Caco-2 (cell line): ENCODE measurements at regions of chr19 and their contacts with region 1.

Region 1: GRCh38 chr19:37370880-37371661 is at the start of gene ZNF527:
- DNase-seq: peak; percentile 93 to 97
- H3K4me3 ChIP-seq: peak within 1 kb of the TSS; percentile 57
- H3K4me3 Mint-ChIP-seq: peak within 1 kb of the TSS; percentile 88
- H3K27ac Mint-ChIP-seq: peak within 1 kb of the TSS; percentile 94
- H3K4me1 ChIP-seq: no peaks in the 10 kb centered on the region
- H3K4me1 Mint-ChIP-seq: no peaks in the 10 kb centered on the region
- H3K27me3 ChIP-seq: no peaks in the 10 kb centered on the region
- H3K27me3 Mint-ChIP-seq: no peaks in the 10 kb centered on the region
- CTCF ChIP-seq: no peak
- total RNA-seq, gene ZNF527: 0.88 and 0.97 TPM in 2 replicates

Region 2: GRCh38 chr19:37077934-37078725 is 292.9 kb before region 1 on chr19 and contains the start of gene ZNF420:
- CTCF ChIA-PET with region 1: no interaction called
- POLR2A ChIA-PET with region 1: interaction called, 4 read pairs
- intact Hi-C with region 1: loop called (anchors 2 kb)
- DNase-seq: peak; percentile 88 to 93
- H3K4me3 ChIP-seq: peak within 1 kb of the TSS; percentile 63
- H3K4me3 Mint-ChIP-seq: peak within 1 kb of the TSS; percentile 84
- H3K27ac Mint-ChIP-seq: peak within 1 kb of the TSS; percentile 83
- H3K4me1 ChIP-seq: no peaks in the 10 kb centered on the region
- H3K4me1 Mint-ChIP-seq: peaks cover 7% of the 10 kb centered on the region
- H3K27me3 ChIP-seq: no peaks in the 10 kb centered on the region
- H3K27me3 Mint-ChIP-seq: no peaks in the 10 kb centered on the region
- CTCF ChIP-seq: no peak
- total RNA-seq, gene ZNF420: 3.2 and 3.3 TPM in 2 replicates

Region 3: DNA sequence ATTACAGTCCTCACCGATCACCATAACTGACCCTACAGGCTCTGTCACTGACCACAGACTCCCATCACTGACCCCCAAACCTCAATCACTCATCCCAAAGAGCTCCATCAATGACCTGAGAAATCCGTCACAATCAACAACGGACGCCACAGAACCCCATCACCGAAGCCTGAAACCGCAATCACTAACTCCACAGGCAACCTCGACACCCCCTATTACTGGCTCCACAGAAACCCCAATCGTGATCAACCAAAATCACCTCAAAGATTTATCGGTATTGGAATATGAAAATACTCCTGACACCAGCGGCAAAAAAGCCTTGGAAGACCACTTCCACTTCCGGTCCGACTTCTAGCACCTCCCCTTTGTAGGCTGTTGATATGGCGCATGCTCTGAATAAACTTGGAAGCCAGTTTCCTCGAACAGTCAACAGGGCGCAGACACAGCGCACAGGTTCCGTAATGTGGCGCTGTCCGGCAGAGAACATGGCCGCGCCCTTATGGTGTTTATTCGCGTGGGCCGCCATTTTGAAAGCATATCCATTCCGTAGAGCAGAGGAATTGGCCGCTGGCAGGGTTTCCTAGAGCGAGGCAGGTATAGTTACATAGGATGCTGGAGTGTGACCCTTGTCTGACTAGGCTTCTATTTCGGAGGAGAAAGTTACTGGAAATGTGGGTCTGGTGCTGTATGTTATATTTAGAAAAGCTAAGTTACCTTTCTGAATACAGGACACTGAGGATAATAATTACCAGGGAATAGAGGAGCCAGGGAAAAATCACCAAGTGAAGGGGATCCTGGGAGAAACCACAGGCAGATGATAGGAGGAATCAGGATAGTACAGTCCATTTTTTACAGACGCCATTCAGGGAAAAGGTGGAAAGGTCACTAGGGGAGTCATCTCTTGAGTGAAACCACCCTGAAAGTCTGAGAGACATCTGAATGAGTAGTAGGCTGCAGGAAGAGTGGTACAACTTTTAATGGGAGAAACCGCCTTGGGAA is 198.4 kb before region 1 on chr19 and contains the start of gene ZNF585A:
- CTCF ChIA-PET with region 1: no interaction called
- POLR2A ChIA-PET with region 1: no interaction called
- intact Hi-C with region 1: loop called (anchors 1 kb)
- DNase-seq: peak; percentile 86 to 93
- H3K4me3 ChIP-seq: peak within 1 kb of the TSS; percentile 55
- H3K4me3 Mint-ChIP-seq: no peak within 1 kb of the TSS
- H3K27ac Mint-ChIP-seq: no peak within 1 kb of the TSS
- H3K4me1 ChIP-seq: no peaks in the 10 kb centered on the region
- H3K4me1 Mint-ChIP-seq: no peaks in the 10 kb centered on the region
- H3K27me3 ChIP-seq: no peaks in the 10 kb centered on the region
- H3K27me3 Mint-ChIP-seq: no peaks in the 10 kb centered on the region
- CTCF ChIP-seq: peak in 1 of 2 experiments; percentile 39
- total RNA-seq, gene ZNF585A: 4.3 and 7.3 TPM in 2 replicates

Region 4: DNA sequence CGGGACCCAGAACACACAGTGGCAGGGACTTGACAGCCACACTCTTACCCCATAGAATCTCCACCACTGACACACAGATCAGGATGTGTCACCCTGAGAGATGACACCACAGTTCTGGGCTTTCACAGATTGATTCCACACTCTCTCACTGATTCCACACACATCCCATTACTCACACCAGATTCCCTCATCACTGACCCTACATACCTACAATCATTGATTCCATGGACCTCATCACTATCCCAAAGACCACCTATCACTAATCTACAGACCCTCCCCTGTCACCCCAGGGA is 57.8 kb before region 1 on chr19:
- CTCF ChIA-PET with region 1: no interaction called
- POLR2A ChIA-PET with region 1: interaction called, 4 read pairs
- intact Hi-C with region 1: loop called (anchors 2 kb)
- DNase-seq: no peak
- H3K4me3 ChIP-seq: no peak overlapping the region
- H3K4me3 Mint-ChIP-seq: peak overlapping the region; percentile 40
- H3K27ac Mint-ChIP-seq: no peak overlapping the region
- H3K4me1 ChIP-seq: no peaks in the 10 kb centered on the region
- H3K4me1 Mint-ChIP-seq: no peaks in the 10 kb centered on the region
- H3K27me3 ChIP-seq: no peaks in the 10 kb centered on the region
- H3K27me3 Mint-ChIP-seq: no peaks in the 10 kb centered on the region
- CTCF ChIP-seq: no peak

Region 5: GRCh38 chr19:37334179-37335071 is 36.6 kb before region 1 on chr19:
- CTCF ChIA-PET with region 1: interaction called, 3 read pairs
- POLR2A ChIA-PET with region 1: interaction called, 6 read pairs
- intact Hi-C with region 1: loop called (anchors 2 kb)
- DNase-seq: peak; percentile 67 to 79
- H3K4me3 ChIP-seq: peak overlapping the region; percentile 48
- H3K4me3 Mint-ChIP-seq: peak overlapping the region; percentile 63
- H3K27ac Mint-ChIP-seq: no peak overlapping the region
- H3K4me1 ChIP-seq: no peaks in the 10 kb centered on the region
- H3K4me1 Mint-ChIP-seq: no peaks in the 10 kb centered on the region
- H3K27me3 ChIP-seq: no peaks in the 10 kb centered on the region
- H3K27me3 Mint-ChIP-seq: no peaks in the 10 kb centered on the region
- CTCF ChIP-seq: no peak

Region 6: DNA sequence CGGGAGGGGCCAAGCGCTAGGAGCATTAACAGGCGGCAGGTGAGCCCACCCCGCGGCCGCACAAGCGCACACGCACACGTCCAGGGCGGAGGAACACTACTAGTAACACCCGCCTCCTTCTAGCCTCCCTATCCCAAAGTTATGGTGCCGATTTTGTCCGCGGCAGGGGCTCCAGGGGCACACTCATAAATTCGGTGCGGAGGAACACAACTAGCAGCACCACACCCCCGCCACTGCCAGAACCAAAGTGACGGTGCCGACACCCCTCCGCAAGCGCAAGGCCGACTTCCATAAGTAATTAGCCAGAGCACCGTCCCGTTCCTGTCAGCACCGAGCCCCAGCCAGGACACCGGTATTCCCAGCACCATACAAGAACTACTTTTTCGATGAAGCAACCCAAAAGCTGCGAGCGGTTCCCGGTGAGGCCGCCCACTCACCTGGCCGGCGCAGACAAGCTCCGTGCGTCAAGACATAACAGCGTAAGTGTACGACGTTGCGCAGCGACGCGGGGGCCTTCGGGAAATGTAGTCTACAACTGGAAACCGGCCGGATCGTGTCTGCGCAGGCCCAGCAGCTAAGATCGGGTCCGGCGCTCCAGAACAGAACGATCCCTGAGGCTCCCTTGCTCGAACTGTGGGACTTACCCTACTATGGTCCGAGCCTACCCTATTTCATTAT is 223.4 kb after region 1 on chr19 and contains the starts of genes ZNF540 and ZNF571:
- CTCF ChIA-PET with region 1: no interaction called
- POLR2A ChIA-PET with region 1: interaction called, 7 read pairs
- intact Hi-C with region 1: loop called (anchors 1 kb)
- DNase-seq: peak; percentile 93 to 95
- H3K4me3 ChIP-seq: peak within 1 kb of the TSS; percentile 73
- H3K4me3 Mint-ChIP-seq: peak within 1 kb of the TSS; percentile 95
- H3K27ac Mint-ChIP-seq: peak within 1 kb of the TSS; percentile 98
- H3K4me1 ChIP-seq: no peaks in the 10 kb centered on the region
- H3K4me1 Mint-ChIP-seq: peaks cover 15% of the 10 kb centered on the region
- H3K27me3 ChIP-seq: no peaks in the 10 kb centered on the region
- H3K27me3 Mint-ChIP-seq: no peaks in the 10 kb centered on the region
- CTCF ChIP-seq: no peak
- total RNA-seq, gene ZNF540: 0.36 TPM in 1 of 2 replicates, not detected in the other
- total RNA-seq, gene ZNF571: 1.4 and 3.6 TPM in 2 replicates

Region 7: GRCh38 chr19:37779127-37780005 is 408.3 kb after region 1 on chr19 and contains the start of gene ZNF573:
- CTCF ChIA-PET with region 1: no interaction called
- POLR2A ChIA-PET with region 1: no interaction called
- intact Hi-C with region 1: loop called (anchors 5 kb)
- DNase-seq: peak; percentile 86 to 90
- H3K4me3 ChIP-seq: peak within 1 kb of the TSS; percentile 86
- H3K4me3 Mint-ChIP-seq: peak within 1 kb of the TSS; percentile 92
- H3K27ac Mint-ChIP-seq: peak within 1 kb of the TSS; percentile 97
- H3K4me1 ChIP-seq: no peaks in the 10 kb centered on the region
- H3K4me1 Mint-ChIP-seq: peaks cover 7% of the 10 kb centered on the region
- H3K27me3 ChIP-seq: no peaks in the 10 kb centered on the region
- H3K27me3 Mint-ChIP-seq: no peaks in the 10 kb centered on the region
- CTCF ChIP-seq: no peak
- total RNA-seq, gene ZNF573: 6.9 and 9.1 TPM in 2 replicates